ENCODE measurements at regions of chr5 and their contacts with region 1.

Region 1: DNA sequence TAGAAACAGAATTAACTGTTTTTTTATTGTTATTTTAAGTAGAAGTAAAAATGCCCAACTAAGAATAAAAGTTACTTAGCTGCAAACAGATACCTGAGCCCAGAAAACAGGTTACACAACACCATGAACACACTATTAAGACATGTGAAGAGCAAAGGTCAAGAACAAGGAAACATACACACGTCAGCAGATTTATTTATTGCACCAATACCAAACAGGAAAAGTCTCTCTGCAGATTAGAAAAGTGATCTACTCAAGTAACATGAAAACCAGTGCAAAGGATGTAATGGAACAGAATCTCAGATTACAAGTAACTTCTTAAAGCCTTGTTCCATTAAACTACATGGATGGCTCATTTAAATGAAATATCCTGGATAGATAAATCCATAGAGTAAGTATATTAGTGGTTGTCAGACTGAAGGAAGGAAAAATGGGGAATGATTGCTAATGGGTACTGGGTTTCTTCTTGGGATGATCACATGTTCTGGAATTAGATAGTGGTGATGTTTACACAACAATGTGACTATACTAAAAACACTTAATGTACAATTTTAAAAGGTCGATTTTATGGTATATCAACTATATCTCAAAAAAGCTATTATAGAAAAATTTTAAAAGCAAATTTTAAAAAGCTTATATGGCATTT is 6.1 kb downstream of the SAR1B start:
- DNase-seq: no peak
- H3K4me3 ChIP-seq: no peak overlapping the region
- H3K27ac ChIP-seq: peak overlapping the region; percentile 32 to 64
- H3K4me1 ChIP-seq: peaks cover 3% of the 10 kb centered on the region
- H3K27me3 ChIP-seq: no peaks in the 10 kb centered on the region
- CTCF ChIP-seq: no peak
- POLR2A ChIP-seq: peak; percentile 10

Region 2: GRCh38 chr5:134648425-134649162 is 22.1 kb after region 1 on chr5 and contains the start of gene SEC24A:
- intact Hi-C with region 1: loop called (anchors 1 kb)
- DNase-seq: peak; percentile 81
- H3K4me3 ChIP-seq: peak within 1 kb of the TSS; percentile 78 to 99
- H3K27ac ChIP-seq: peak within 1 kb of the TSS; percentile 86 to 88
- H3K4me1 ChIP-seq: peaks cover 4% of the 10 kb centered on the region
- H3K27me3 ChIP-seq: no peaks in the 10 kb centered on the region
- CTCF ChIP-seq: peak in 1 of 4 experiments; percentile 31
- POLR2A ChIP-seq: peak; percentile 71
- total RNA-seq, gene SEC24A: 15.5 to 20.0 TPM

Measured in prostate gland (tissue), 2 donors.